CD14-positive monocyte (primary cell): ENCODE measurements at regions of chr20 and their contacts with region 1.

Region 1: DNA sequence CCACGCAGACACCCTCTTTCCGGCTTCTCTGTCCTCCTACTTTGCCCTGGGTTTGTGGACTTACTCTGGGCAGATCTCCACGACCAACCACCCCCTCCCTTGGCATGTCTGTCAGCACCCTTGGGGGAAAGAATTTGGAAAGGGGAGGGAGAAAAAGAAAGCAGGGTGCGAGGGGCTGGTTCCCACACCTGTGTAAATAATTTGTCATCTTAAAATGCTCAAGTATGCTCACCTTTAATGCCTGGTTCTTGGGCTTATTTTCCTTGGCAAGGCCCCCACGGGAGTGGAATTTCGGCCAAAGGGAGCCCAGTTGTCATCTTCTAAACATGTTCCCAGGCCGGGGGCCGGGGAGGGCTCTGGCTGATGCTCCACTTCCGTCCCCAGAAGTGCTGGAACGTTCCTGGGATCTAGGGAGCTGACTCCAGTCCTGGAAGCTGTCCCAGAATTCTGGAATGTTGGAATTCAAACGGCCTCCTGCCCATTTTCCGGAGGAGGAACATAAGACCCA is 122.1 kb downstream of the CEBPB start:
- DNase-seq: no peak
- H3K4me3 ChIP-seq: no peak overlapping the region
- H3K4me3 Mint-ChIP-seq: no peak overlapping the region
- H3K27ac ChIP-seq: no peak overlapping the region
- H3K27ac Mint-ChIP-seq: no peak overlapping the region
- H3K4me1 ChIP-seq: peaks cover 22 to 23% of the 10 kb centered on the region in 2 donors
- H3K4me1 Mint-ChIP-seq: peaks cover 36% of the 10 kb centered on the region
- H3K27me3 ChIP-seq: no peaks in the 10 kb centered on the region
- H3K27me3 Mint-ChIP-seq: peaks cover 3 to 6% (median 4%) of the 10 kb centered on the region in 3 donors
- CTCF ChIP-seq: no peak

Region 2: DNA sequence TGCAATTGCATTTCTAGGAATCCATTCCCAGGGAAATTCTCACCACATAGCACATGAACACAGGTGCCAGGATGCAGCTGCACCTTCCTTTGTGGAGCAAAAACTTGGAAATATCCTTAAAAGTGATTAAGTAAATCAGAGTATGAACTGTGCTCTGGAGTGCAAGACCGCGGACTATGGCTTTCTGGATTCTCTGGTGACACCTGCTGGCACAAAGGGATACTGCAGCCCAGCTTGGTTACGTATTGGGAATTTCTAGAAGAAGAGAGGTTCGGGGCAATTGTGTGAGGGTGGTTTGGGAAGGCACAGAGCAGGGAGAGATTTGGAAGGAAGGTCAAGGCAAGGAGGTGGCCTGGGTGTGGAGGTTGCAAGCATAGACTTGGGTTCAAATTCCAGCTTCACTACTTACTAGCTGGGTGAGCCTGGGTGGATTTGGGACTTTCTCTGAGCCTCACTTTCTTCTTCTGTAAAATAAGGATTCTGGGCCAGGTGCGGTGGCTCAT is 143.4 kb before region 1 on chr20:
- intact Hi-C with region 1: no loop called
- DNase-seq: peak; percentile 69 to 80 (median 78)
- H3K4me3 ChIP-seq: no peak overlapping the region
- H3K4me3 Mint-ChIP-seq: no peak overlapping the region
- H3K27ac ChIP-seq: no peak overlapping the region
- H3K27ac Mint-ChIP-seq: peak overlapping the region in 3 of 7 donors; percentile 1 to 46 (median 32)
- H3K4me1 ChIP-seq: peaks cover 29 to 30% of the 10 kb centered on the region in 2 donors
- H3K4me1 Mint-ChIP-seq: peaks cover 26% of the 10 kb centered on the region
- H3K27me3 ChIP-seq: peaks cover 0 to 10% of the 10 kb centered on the region in 2 donors
- H3K27me3 Mint-ChIP-seq: peaks cover 13 to 17% (median 15%) of the 10 kb centered on the region in 3 donors
- CTCF ChIP-seq: peak; percentile 94

Region 3: GRCh38 chr20:50335105-50335504 is 22.4 kb after region 1 on chr20:
- intact Hi-C with region 1: no loop called
- DNase-seq: peak; percentile 54 to 83 (median 80)
- H3K4me3 ChIP-seq: no peak overlapping the region
- H3K4me3 Mint-ChIP-seq: no peak overlapping the region
- H3K27ac ChIP-seq: no peak overlapping the region
- H3K27ac Mint-ChIP-seq: peak overlapping the region; percentile 57 to 93 (median 73)
- H3K4me1 ChIP-seq: peaks cover 70 to 85% of the 10 kb centered on the region in 2 donors
- H3K4me1 Mint-ChIP-seq: peaks cover 71% of the 10 kb centered on the region
- H3K27me3 ChIP-seq: no peaks in the 10 kb centered on the region
- H3K27me3 Mint-ChIP-seq: peaks cover 0 to 4% (median 0%) of the 10 kb centered on the region in 3 donors
- CTCF ChIP-seq: no peak

Region 4: GRCh38 chr20:50346372-50347283 is 33.9 kb after region 1 on chr20:
- intact Hi-C with region 1: loop called in 1 of 2 experiments (anchors 5 kb)
- DNase-seq: peak; percentile 47 to 58 (median 51)
- H3K4me3 ChIP-seq: peak overlapping the region in 1 of 3 experiments; percentile 51
- H3K4me3 Mint-ChIP-seq: peak overlapping the region; percentile 67 to 84
- H3K27ac ChIP-seq: peak overlapping the region; percentile 84 to 94
- H3K27ac Mint-ChIP-seq: peak overlapping the region; percentile 97 to 99 (median 98)
- H3K4me1 ChIP-seq: peaks cover 76 to 82% of the 10 kb centered on the region in 2 donors
- H3K4me1 Mint-ChIP-seq: peaks cover 78% of the 10 kb centered on the region
- H3K27me3 ChIP-seq: no peaks in the 10 kb centered on the region
- H3K27me3 Mint-ChIP-seq: peaks cover 1 to 6% (median 4%) of the 10 kb centered on the region in 3 donors
- CTCF ChIP-seq: no peak